A549 (cell line): ENCODE measurements at regions of chr9 and their contacts with region 1.

Region 1: GRCh38 chr9:17462869-17463464 is 115.9 kb upstream of the SH3GL2 start:
- DNase-seq: peak; percentile 7 to 55
- ATAC-seq: peak in 1 of 2 experiments; percentile 58; a peak in 2 of 6 replicates
- H3K4me3 ChIP-seq: no peak overlapping the region
- H3K27ac ChIP-seq: no peak overlapping the region
- H3K4me1 ChIP-seq: no peaks in the 10 kb centered on the region
- CTCF ChIP-seq: peak; percentile 92
- EP300 ChIP-seq: no peak
- POLR2A ChIP-seq: no peak
- RAD21 ChIP-seq: peak; percentile 85 to 90

Region 2: DNA sequence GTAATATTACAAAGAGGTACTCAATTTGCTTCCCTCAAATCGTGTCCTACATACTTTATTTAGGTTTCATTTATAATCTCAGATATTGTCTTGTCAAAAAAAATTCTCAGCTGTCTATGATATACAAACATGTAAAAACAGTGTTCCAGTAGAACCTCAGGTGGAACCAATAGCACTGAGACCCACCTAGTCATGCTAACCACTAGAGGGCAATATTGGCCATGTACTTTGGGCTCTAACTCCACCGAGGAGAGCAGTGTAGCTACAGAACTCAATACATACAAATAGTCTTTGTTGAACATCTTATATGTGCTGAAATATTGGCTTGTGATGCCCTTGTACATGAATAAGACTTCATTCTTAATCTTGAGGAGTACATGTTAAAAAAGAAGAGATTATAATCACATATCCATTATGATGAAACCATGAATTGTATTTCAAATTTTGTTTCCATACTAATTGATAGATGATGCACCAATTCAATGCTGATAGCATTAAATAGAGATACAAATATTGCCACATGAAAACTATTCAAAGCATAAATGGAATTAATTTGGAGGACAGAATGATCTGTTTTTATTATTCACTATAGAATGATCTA is 399.3 kb before region 1 on chr9:
- CTCF ChIA-PET with region 1: interaction called, 11 read pairs
- POLR2A ChIA-PET with region 1: no interaction called
- DNase-seq: peak; percentile 23 to 69
- ATAC-seq: peak; percentile 98
- H3K4me3 ChIP-seq: no peak overlapping the region
- H3K27ac ChIP-seq: no peak overlapping the region
- H3K4me1 ChIP-seq: peaks cover 13% of the 10 kb centered on the region
- CTCF ChIP-seq: peak; percentile 76
- EP300 ChIP-seq: no peak
- POLR2A ChIP-seq: no peak
- RAD21 ChIP-seq: peak; percentile 68 to 78

Region 3: GRCh38 chr9:17116400-17116837 is 346.5 kb before region 1 on chr9:
- CTCF ChIA-PET with region 1: interaction called, 12 read pairs
- POLR2A ChIA-PET with region 1: no interaction called
- DNase-seq: peak; percentile 31 to 52
- ATAC-seq: peak in 1 of 2 experiments; percentile 70; a peak in 3 of 6 replicates
- H3K4me3 ChIP-seq: no peak overlapping the region
- H3K27ac ChIP-seq: no peak overlapping the region
- H3K4me1 ChIP-seq: no peaks in the 10 kb centered on the region
- CTCF ChIP-seq: peak; percentile 72
- EP300 ChIP-seq: no peak
- POLR2A ChIP-seq: no peak
- RAD21 ChIP-seq: peak; percentile 62 to 65